ENCODE measurements at regions of chr9 and their contacts with region 1.

Region 1: DNA sequence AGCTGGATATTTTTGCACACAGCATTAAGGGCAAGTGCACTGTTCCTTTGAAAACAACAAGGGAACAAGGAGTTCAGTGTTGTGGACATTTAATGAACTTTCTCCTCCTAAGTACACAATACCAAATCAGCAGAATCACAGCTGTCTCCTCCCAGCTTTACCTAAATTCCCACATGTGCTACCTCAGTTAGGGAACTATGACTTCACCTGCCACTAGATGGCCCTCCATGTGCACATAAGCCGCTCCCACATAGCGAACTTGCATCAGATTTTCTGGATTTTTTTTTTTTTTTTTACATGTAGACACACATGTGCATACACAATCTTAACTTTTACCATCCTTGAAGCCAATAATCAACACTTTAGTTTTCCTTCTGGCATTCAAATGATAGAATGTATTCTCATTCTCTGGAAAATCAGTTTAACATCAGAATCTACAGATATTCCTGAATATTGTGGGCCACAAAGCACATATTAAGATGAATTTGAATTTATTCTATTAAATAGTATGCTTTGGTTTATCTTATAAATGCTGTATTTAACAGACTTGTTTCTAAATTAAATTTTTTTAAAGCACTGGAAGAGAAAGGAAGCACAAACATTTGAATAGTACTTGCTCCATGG is 123.6 kb downstream of the PALM2AKAP2 start:
- DNase-seq: peak; percentile 72
- ATAC-seq: peak; percentile 80
- H3K4me3 Mint-ChIP-seq: no peak overlapping the region
- H3K27ac Mint-ChIP-seq: no peak overlapping the region
- H3K4me1 Mint-ChIP-seq: no peaks in the 10 kb centered on the region
- H3K27me3 Mint-ChIP-seq: peaks cover 15% of the 10 kb centered on the region

Region 2: DNA sequence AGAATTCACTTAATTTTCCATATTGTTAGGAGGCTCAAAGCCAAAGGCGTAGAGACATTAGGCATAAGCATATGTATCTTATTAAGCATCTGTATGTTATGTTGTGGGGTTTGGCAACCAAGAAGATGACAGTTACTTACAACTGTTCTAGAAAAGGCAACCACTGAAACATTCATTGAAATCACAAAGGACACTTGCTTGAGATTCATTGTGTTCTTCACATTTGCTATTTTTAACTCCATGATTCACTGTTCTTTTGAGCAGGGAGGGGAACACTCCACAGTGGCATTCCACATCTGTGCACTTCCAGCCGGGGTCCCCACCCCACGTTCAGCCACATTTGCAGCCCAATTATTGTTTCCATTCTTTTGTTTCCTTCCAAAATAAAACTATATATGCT is 16.5 kb before region 1 on chr9:
- CTCF ChIA-PET with region 1: interaction called, 14 read pairs
- POLR2A ChIA-PET with region 1: no interaction called
- DNase-seq: no peak
- ATAC-seq: no peak
- H3K4me3 Mint-ChIP-seq: no peak overlapping the region
- H3K27ac Mint-ChIP-seq: no peak overlapping the region
- H3K4me1 Mint-ChIP-seq: peaks cover 34% of the 10 kb centered on the region
- H3K27me3 Mint-ChIP-seq: no peaks in the 10 kb centered on the region

Region 3: GRCh38 chr9:109945573-109945972 is 41.9 kb after region 1 on chr9:
- CTCF ChIA-PET with region 1: no interaction called
- POLR2A ChIA-PET with region 1: no interaction called
- DNase-seq: no peak
- ATAC-seq: no peak
- H3K4me3 Mint-ChIP-seq: no peak overlapping the region
- H3K27ac Mint-ChIP-seq: no peak overlapping the region
- H3K4me1 Mint-ChIP-seq: no peaks in the 10 kb centered on the region
- H3K27me3 Mint-ChIP-seq: peaks cover 16% of the 10 kb centered on the region

Region 4: GRCh38 chr9:110048403-110048975 is 144.9 kb after region 1 on chr9:
- CTCF ChIA-PET with region 1: interaction called, 20 read pairs
- POLR2A ChIA-PET with region 1: no interaction called
- DNase-seq: peak; percentile 84
- ATAC-seq: peak; percentile 95
- H3K4me3 Mint-ChIP-seq: peak overlapping the region; percentile 90
- H3K27ac Mint-ChIP-seq: peak overlapping the region; percentile 75
- H3K4me1 Mint-ChIP-seq: peaks cover 48% of the 10 kb centered on the region
- H3K27me3 Mint-ChIP-seq: peaks cover 15% of the 10 kb centered on the region

Region 5: GRCh38 chr9:110058304-110058953 is 154.8 kb after region 1 on chr9:
- CTCF ChIA-PET with region 1: interaction called, 29 read pairs
- POLR2A ChIA-PET with region 1: no interaction called
- DNase-seq: peak; percentile 60
- ATAC-seq: no peak
- H3K4me3 Mint-ChIP-seq: no peak overlapping the region
- H3K27ac Mint-ChIP-seq: peak overlapping the region; percentile 47
- H3K4me1 Mint-ChIP-seq: peaks cover 8% of the 10 kb centered on the region
- H3K27me3 Mint-ChIP-seq: peaks cover 2% of the 10 kb centered on the region

Region 6: DNA sequence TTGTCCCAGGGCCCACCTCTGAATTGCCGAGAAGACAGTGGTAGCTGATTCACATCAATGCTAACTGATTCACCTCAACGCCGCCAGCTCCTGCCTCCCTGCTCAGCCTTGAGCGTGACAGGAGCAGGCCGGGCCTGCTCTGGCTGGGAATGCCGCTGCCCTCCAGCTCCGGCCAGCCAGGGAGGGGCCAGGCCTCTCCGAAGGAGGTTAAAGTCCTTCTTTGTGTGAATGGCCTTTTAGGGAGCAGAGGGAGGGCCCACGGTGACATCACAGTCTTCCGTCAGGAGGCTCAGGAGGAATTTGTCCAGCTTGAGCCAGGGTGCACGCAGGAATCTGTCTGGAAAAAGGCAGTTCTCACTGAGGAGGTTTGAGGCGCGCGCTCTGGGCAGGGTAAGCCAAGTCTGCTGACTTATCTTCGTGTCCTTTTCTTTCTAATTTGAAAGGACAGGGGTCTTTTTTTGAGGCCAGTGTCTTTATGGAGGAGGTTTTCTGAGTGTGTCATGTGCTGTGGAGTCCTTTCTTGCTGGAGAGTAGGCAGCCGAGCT is 221.7 kb after region 1 on chr9:
- CTCF ChIA-PET with region 1: interaction called, 10 read pairs
- POLR2A ChIA-PET with region 1: no interaction called
- DNase-seq: no peak
- ATAC-seq: no peak
- H3K4me3 Mint-ChIP-seq: no peak overlapping the region
- H3K27ac Mint-ChIP-seq: peak overlapping the region; percentile 53
- H3K4me1 Mint-ChIP-seq: peaks cover 21% of the 10 kb centered on the region
- H3K27me3 Mint-ChIP-seq: no peaks in the 10 kb centered on the region

Region 7: DNA sequence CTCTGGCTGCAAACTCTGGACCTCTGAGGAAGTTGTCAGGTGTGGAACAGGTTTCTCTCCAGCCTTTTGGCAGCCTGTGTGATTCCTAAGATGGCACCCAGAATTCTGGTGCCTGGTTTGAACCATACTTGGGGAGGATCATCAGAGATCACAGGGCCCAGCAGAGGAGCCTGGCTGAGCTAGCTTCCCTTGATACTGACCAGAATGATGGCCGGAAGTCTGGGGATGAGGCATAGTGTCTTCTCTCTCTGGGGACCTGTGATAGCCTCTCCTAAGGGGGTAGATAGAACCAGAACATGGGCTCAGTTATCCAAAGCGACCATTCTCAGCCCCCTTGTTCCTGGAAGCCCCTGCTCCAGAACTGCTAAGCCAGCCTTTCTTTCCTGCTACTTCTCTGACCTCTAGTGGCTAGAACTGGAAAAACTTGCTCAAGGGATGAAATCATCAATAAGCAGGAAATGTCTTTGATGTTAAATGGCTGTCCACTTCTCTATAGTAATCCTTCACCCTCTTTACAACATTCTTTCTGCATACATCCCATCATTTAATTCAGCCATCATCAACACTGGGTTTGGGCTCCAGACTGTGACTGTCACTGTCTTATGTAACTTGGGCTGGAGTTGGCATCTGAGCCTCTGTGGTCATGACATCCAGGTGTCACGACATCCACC is 249.2 kb after region 1 on chr9:
- CTCF ChIA-PET with region 1: interaction called, 110 read pairs
- POLR2A ChIA-PET with region 1: interaction called, 4 read pairs
- DNase-seq: peak; percentile 60
- ATAC-seq: no peak
- H3K4me3 Mint-ChIP-seq: no peak overlapping the region
- H3K27ac Mint-ChIP-seq: peak overlapping the region; percentile 77
- H3K4me1 Mint-ChIP-seq: peaks cover 86% of the 10 kb centered on the region
- H3K27me3 Mint-ChIP-seq: no peaks in the 10 kb centered on the region

Region 8: GRCh38 chr9:110217656-110218099 is 314.1 kb after region 1 on chr9:
- CTCF ChIA-PET with region 1: interaction called, 16 read pairs
- POLR2A ChIA-PET with region 1: no interaction called
- DNase-seq: peak; percentile 23
- ATAC-seq: no peak
- H3K4me3 Mint-ChIP-seq: no peak overlapping the region
- H3K27ac Mint-ChIP-seq: no peak overlapping the region
- H3K4me1 Mint-ChIP-seq: peaks cover 12% of the 10 kb centered on the region
- H3K27me3 Mint-ChIP-seq: peaks cover 11% of the 10 kb centered on the region